K562 (cell line): ENCODE measurements at regions of chr22 and their contacts with region 1.

Region 1: DNA sequence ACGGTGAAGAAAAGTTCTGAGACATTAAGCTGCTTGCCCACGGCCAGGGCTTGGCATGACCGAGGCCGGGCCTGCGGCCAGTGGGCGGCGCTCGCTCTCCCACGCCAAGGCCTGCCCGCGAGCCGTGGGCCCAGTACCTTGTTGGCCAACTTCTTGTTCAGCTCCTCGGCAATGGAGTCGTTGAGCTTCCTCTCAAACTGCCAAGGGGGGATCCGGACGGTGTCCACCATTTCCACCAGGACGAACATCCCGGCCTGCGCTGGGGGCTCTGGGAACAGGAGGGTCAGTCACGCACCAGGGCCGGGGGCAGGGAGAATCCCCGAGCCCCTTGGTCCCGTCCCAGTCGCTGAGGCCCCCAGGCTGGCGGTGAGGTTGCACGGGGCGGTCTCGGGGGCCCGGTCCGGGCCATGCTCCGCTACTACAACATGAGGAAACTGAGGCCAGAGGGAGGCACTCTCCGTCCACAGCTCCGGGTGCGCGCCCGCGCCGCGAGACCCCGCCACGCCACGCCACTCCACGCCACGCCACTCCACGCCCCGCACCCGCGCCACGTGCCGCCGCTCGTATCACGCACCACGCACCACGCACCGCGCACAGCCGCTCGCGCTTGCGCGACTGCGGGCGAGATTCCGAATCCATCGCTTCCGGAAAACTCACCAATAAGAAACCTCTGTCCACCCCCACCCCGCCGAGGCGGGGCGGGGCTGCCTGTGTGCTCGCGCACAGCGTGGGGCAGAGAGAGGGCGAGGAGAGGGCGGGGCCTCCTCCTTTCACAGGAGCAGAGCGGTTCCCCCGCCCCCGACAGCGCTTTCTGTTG is at the start of gene POLR3H:
- DNase-seq: peak; percentile 94 to 97 (median 95)
- ATAC-seq: peak; percentile 97
- H3K4me3 ChIP-seq: peak within 1 kb of the TSS; percentile 93
- H3K27ac ChIP-seq: peak within 1 kb of the TSS; percentile 89
- H3K4me1 ChIP-seq: peaks cover 36 to 50% of the 10 kb centered on the region in 2 experiments; a peak in 4 of 5 replicates
- H3K27me3 ChIP-seq: no peaks in the 10 kb centered on the region
- CTCF ChIP-seq: peak; percentile 66 to 82 (median 67)
- EP300 ChIP-seq: no peak
- POLR2A ChIP-seq: no peak; the same call in 1 of the 2 replicates
- RAD21 ChIP-seq: peak; percentile 28 to 62; a peak in 3 of 4 replicates
- polyA plus RNA-seq, gene POLR3H: 5.3 to 10.3 TPM

Region 2: GRCh38 chr22:41589391-41590241 is 45.6 kb after region 1 on chr22 and contains the start of gene PMM1:
- CTCF ChIA-PET with region 1: no interaction called
- POLR2A ChIA-PET with region 1: interaction called, 5 read pairs
- in situ Hi-C with region 1: no loop called
- intact Hi-C with region 1: loop called (anchors 5 kb)
- DNase-seq: peak; percentile 94 to 99 (median 96)
- ATAC-seq: peak; percentile 97
- H3K4me3 ChIP-seq: peak within 1 kb of the TSS; percentile 85
- H3K27ac ChIP-seq: peak within 1 kb of the TSS; percentile 87
- H3K4me1 ChIP-seq: peaks cover 11 to 24% of the 10 kb centered on the region in 2 experiments; a peak in 4 of 5 replicates
- H3K27me3 ChIP-seq: no peaks in the 10 kb centered on the region
- CTCF ChIP-seq: no peak
- EP300 ChIP-seq: no peak
- POLR2A ChIP-seq: peak; percentile 71
- RAD21 ChIP-seq: no peak
- polyA plus RNA-seq, gene PMM1: 17.6 to 23.8 TPM